ENCODE measurements at regions of chr1 and their contacts with region 1.

Region 1: DNA sequence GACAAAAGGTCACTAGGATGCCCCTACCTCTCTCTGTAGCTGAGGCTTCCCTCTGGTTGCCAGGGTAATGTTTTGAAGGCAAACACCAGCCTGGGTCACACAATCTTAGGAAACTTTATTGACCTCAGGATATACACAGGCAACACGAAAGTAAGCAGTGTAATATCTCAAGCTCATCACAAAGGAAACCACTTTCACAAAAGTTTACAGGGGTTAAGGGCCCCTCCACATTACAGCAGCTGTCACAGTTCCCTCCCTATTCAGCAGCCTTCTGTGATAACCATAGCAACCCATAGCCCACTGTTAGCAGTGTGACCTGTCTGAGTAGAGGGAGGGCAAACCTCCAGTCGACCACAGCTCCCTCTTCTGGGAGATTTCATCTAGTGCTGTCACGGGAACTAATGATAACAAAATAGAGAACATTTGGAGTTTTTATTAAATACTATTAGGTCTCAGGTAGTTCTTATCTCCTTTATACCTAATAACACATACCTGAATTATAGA is 149.8 kb downstream of the PTPRC start:
- DNase-seq: peak; percentile 83 to 98 (median 96)
- H3K4me3 ChIP-seq: peak overlapping the region in 2 of 7 experiments; percentile 1 to 14
- H3K27ac ChIP-seq: peak overlapping the region; percentile 61 to 89
- H3K4me1 ChIP-seq: peaks cover 11 to 35% (median 16%) of the 10 kb centered on the region in 4 experiments
- H3K27me3 ChIP-seq: no peaks in the 10 kb centered on the region

Region 2: DNA sequence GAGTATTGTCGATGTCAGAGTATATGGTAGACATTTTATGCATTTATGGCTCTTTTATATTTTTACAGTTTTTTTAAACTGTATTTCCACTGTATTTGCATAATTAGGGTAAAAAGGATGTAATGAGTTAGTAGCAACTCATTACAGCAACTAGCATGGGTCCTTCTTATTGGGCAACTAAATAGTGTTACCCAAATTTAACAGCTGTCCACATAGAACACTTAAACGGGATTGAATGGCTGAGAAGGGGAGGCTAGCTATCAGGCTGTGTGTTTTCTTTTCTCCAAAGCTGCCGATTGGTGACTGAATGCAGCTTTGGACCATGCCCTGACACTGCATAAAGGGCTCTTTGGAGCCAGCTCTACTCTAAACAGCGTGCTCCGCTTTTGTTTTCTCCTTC is 74.3 kb before region 1 on chr1:
- CTCF ChIA-PET with region 1: no interaction called
- POLR2A ChIA-PET with region 1: no interaction called
- DNase-seq: no peak
- H3K4me3 ChIP-seq: no peak overlapping the region
- H3K27ac ChIP-seq: no peak overlapping the region
- H3K4me1 ChIP-seq: no peaks in the 10 kb centered on the region
- H3K27me3 ChIP-seq: no peaks in the 10 kb centered on the region

Region 3: GRCh38 chr1:198771563-198772153 is 17.0 kb before region 1 on chr1:
- CTCF ChIA-PET with region 1: interaction called, 21 read pairs
- POLR2A ChIA-PET with region 1: interaction called, 6 read pairs
- DNase-seq: peak; percentile 79 to 87 (median 86)
- H3K4me3 ChIP-seq: peak overlapping the region in 1 of 7 experiments; percentile 39
- H3K27ac ChIP-seq: no peak overlapping the region
- H3K4me1 ChIP-seq: peaks cover 31 to 55% (median 33%) of the 10 kb centered on the region in 4 experiments
- H3K27me3 ChIP-seq: no peaks in the 10 kb centered on the region

Measured in common myeloid progenitor, CD34-positive (primary cell).